Body of pancreas (tissue), 4 donors: ENCODE measurements at regions of chr21 and their contacts with region 1.

Region 1: DNA sequence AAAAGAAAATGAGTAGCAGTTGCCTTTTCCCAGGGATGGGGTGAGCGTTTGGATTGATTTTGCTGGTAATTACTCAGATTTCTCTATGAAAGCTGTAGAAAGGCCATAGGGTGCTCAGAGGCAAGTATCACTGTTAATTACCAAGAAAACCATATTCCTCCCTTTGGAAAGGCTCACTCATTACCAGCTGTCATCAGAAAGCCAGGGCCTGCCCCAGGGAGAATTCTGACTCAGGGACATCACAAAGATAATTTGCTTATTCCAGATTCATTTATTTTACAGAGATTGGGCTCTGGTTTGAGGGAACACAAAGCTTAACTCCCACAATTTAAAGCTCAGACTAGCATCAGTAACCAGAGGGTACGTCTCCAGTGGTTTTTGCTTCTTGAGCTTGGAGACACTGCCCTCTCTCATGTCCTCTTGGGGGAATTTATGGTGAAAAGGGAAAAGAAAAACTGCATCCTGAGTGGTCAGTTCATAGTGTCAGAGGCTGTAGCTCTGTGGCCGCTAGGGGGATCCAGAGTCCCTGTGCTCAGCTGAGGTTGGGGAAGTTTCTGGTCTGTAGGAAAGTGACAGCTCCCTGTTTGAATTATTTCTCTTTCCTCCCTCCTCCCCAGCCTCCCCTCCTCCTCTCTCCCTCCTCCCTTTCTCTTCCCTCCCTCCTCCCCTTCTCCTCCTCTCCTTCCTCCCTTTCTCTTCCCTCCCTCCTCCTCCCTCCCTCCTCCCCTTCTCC is 204.3 kb downstream of the KCNJ6 start:
- DNase-seq: peak; percentile 68 to 75 (median 70)
- ATAC-seq: peak; percentile 69
- H3K4me3 ChIP-seq: no peak overlapping the region
- H3K27ac ChIP-seq: no peak overlapping the region
- H3K4me1 ChIP-seq: no peaks in the 10 kb centered on the region
- H3K27me3 ChIP-seq: no peaks in the 10 kb centered on the region
- CTCF ChIP-seq: peak; percentile 60 to 79 (median 72)
- POLR2A ChIP-seq: no peak

Region 2: GRCh38 chr21:38126669-38127303 is 414.8 kb after region 1 on chr21:
- intact Hi-C with region 1: loop called (anchors 10 kb)
- DNase-seq: peak; percentile 62 to 75 (median 68)
- ATAC-seq: peak; percentile 33
- H3K4me3 ChIP-seq: no peak overlapping the region
- H3K27ac ChIP-seq: no peak overlapping the region
- H3K4me1 ChIP-seq: no peaks in the 10 kb centered on the region
- H3K27me3 ChIP-seq: no peaks in the 10 kb centered on the region
- CTCF ChIP-seq: peak; percentile 54 to 79 (median 67)
- POLR2A ChIP-seq: no peak

Region 3: GRCh38 chr21:38363693-38364092 is 651.7 kb after region 1 on chr21:
- intact Hi-C with region 1: loop called (anchors 5 kb)
- DNase-seq: no peak
- ATAC-seq: no peak
- H3K4me3 ChIP-seq: no peak overlapping the region
- H3K27ac ChIP-seq: no peak overlapping the region
- H3K4me1 ChIP-seq: no peaks in the 10 kb centered on the region
- H3K27me3 ChIP-seq: no peaks in the 10 kb centered on the region
- CTCF ChIP-seq: no peak
- POLR2A ChIP-seq: no peak